ENCODE measurements at regions of chr11 and their contacts with region 1.

Region 1: GRCh38 chr11:72413914-72414628 is 20.3 kb downstream of the CLPB start:
- DNase-seq: peak; percentile 92
- ATAC-seq: peak; percentile 85
- H3K4me3 Mint-ChIP-seq: no peak overlapping the region
- H3K27ac Mint-ChIP-seq: peak overlapping the region; percentile 57
- H3K4me1 Mint-ChIP-seq: peaks cover 29% of the 10 kb centered on the region
- H3K27me3 Mint-ChIP-seq: no peaks in the 10 kb centered on the region

Region 2: GRCh38 chr11:71977743-71978418 is 436.2 kb before region 1 on chr11:
- CTCF ChIA-PET with region 1: interaction called, 3 read pairs
- POLR2A ChIA-PET with region 1: no interaction called
- intact Hi-C with region 1: loop called in 1 of 2 experiments (anchors 5 kb)
- DNase-seq: peak; percentile 69
- ATAC-seq: peak; percentile 63
- H3K4me3 Mint-ChIP-seq: no peak overlapping the region
- H3K27ac Mint-ChIP-seq: no peak overlapping the region
- H3K4me1 Mint-ChIP-seq: peaks cover 2% of the 10 kb centered on the region
- H3K27me3 Mint-ChIP-seq: no peaks in the 10 kb centered on the region

Region 3: GRCh38 chr11:72216638-72217037 is 197.4 kb before region 1 on chr11 and contains the start of gene FOLR2:
- CTCF ChIA-PET with region 1: no interaction called
- POLR2A ChIA-PET with region 1: no interaction called
- intact Hi-C with region 1: no loop called
- DNase-seq: no peak
- ATAC-seq: no peak
- H3K4me3 Mint-ChIP-seq: no peak within 1 kb of the TSS
- H3K27ac Mint-ChIP-seq: no peak within 1 kb of the TSS
- H3K4me1 Mint-ChIP-seq: no peaks in the 10 kb centered on the region
- H3K27me3 Mint-ChIP-seq: peaks cover 21% of the 10 kb centered on the region
- total RNA-seq, gene FOLR2: not detected

Region 4: GRCh38 chr11:72238040-72238450 is 176.0 kb before region 1 on chr11:
- CTCF ChIA-PET with region 1: no interaction called
- POLR2A ChIA-PET with region 1: no interaction called
- intact Hi-C with region 1: loop called in 1 of 2 experiments (anchors 5 kb)
- DNase-seq: peak; percentile 78
- ATAC-seq: peak; percentile 76
- H3K4me3 Mint-ChIP-seq: no peak overlapping the region
- H3K27ac Mint-ChIP-seq: no peak overlapping the region
- H3K4me1 Mint-ChIP-seq: peaks cover 11% of the 10 kb centered on the region
- H3K27me3 Mint-ChIP-seq: peaks cover 32% of the 10 kb centered on the region

Region 5: GRCh38 chr11:72293910-72294615 is 120.0 kb before region 1 on chr11:
- CTCF ChIA-PET with region 1: interaction called, 10 read pairs
- POLR2A ChIA-PET with region 1: no interaction called
- intact Hi-C with region 1: loop called (anchors 1 kb)
- DNase-seq: no peak
- ATAC-seq: no peak
- H3K4me3 Mint-ChIP-seq: no peak overlapping the region
- H3K27ac Mint-ChIP-seq: no peak overlapping the region
- H3K4me1 Mint-ChIP-seq: no peaks in the 10 kb centered on the region
- H3K27me3 Mint-ChIP-seq: no peaks in the 10 kb centered on the region

Region 6: GRCh38 chr11:72328366-72329224 is 85.5 kb before region 1 on chr11:
- CTCF ChIA-PET with region 1: interaction called, 6 read pairs
- POLR2A ChIA-PET with region 1: no interaction called
- intact Hi-C with region 1: loop called in 1 of 2 experiments (anchors 5 kb)
- DNase-seq: no peak
- ATAC-seq: no peak
- H3K4me3 Mint-ChIP-seq: no peak overlapping the region
- H3K27ac Mint-ChIP-seq: no peak overlapping the region
- H3K4me1 Mint-ChIP-seq: peaks cover 25% of the 10 kb centered on the region
- H3K27me3 Mint-ChIP-seq: no peaks in the 10 kb centered on the region

Region 7: DNA sequence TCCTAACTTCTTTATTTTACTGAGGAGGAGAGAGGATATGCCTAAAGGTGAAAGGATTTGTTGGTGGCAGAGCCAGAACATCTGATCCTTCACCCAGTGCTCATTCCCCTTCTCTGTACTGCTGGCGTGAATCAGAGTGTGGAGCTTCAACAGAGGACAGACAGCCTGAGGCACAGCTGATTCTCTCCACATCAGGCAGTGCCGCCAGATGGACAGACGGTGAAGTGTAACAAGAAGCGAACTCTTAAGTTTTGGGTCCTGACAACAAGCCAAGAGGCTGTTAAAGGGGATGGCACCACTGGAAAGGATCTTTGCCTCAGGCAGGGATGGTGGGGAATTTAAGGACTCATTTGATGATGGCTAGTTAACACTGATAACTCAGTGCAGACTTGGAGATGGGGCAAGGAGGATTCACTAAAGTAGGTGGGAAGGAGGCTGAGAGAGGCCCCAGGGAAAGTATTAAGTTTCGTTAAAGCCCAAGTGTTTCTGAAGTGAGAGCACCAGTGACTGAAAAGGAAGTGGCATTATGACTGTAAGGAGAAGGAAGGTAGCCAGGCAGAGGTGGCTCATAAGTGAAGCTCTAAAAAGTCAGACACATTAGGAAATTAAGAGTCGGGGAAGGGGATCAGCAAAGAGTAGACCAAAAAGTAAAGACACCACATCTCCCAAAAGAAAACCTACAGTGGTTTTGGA is 61.1 kb before region 1 on chr11:
- CTCF ChIA-PET with region 1: interaction called, 6 read pairs
- POLR2A ChIA-PET with region 1: no interaction called
- intact Hi-C with region 1: loop called in 1 of 2 experiments (anchors 5 kb)
- DNase-seq: peak; percentile 47
- ATAC-seq: peak; percentile 96
- H3K4me3 Mint-ChIP-seq: no peak overlapping the region
- H3K27ac Mint-ChIP-seq: no peak overlapping the region
- H3K4me1 Mint-ChIP-seq: no peaks in the 10 kb centered on the region
- H3K27me3 Mint-ChIP-seq: no peaks in the 10 kb centered on the region